Naive thymus-derived CD4-positive, alpha-beta T cell (primary cell): ENCODE measurements at regions of chr19 and their contacts with region 1.

Region 1: DNA sequence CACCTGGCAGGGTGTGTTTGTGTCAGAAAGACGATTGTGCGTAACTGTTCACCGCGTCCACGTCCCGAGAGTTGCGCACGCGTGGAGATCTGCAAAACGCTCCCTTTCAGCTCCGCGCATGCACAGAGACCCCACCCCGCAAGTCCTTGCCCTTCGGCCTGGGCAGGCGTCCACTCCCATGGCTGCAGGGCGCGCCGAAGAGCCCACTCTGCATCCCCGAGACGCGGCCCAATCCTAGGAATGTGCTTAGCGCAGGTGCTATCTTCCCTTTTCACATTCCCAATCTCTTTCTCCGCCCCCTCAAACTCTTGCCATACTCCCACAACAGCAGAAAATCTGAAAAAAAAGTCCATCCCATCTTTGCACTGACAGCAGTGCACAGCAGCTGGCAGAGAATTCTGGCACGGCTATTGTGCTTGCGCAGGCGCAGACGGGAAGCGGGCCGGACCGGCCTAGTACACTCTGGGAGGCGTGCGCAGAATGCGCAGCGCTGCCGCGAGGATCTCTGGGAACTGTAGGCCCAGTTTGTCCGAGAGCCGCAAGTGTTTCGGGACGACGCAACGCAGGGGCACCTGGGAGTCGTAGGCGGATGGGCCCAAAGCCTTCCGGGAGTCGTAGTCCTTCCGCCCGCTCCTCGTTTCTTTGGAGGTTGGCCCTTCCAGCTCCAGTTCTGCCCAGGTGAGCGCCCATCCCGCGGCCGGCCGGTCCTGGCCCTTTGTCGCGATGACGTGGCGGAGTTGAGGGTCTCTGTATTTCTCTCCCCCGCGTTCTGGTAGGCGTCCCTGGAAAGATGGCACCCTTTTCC is 23.1 kb downstream of the ZNF175 start:
- DNase-seq: peak; percentile 87 to 95 (median 91)
- ATAC-seq: peak; percentile 100
- H3K4me3 ChIP-seq: peak overlapping the region; percentile 88
- H3K4me3 Mint-ChIP-seq: peak overlapping the region; percentile 88 to 99 (median 96)
- H3K27ac ChIP-seq: peak overlapping the region; percentile 66
- H3K27ac Mint-ChIP-seq: peak overlapping the region; percentile 29 to 97 (median 78)
- H3K4me1 ChIP-seq: peaks cover 6 to 17% of the 10 kb centered on the region in 2 donors
- H3K4me1 Mint-ChIP-seq: peaks cover 19 to 37% (median 24%) of the 10 kb centered on the region in 7 donors
- H3K27me3 ChIP-seq: no peaks in the 10 kb centered on the region
- H3K27me3 Mint-ChIP-seq: peaks cover 0 to 23% (median 15%) of the 10 kb centered on the region in 5 donors

Region 2: GRCh38 chr19:50511068-50511822 is 1082.9 kb before region 1 on chr19 and contains the start of gene JOSD2:
- CTCF ChIA-PET with region 1: no interaction called
- POLR2A ChIA-PET with region 1: no interaction called
- intact Hi-C with region 1: loop called in 1 of 2 experiments (anchors 2 kb)
- DNase-seq: peak; percentile 89 to 99 (median 96)
- ATAC-seq: peak; percentile 94
- H3K4me3 ChIP-seq: peak within 1 kb of the TSS; percentile 75
- H3K4me3 Mint-ChIP-seq: peak within 1 kb of the TSS; percentile 75 to 97 (median 88)
- H3K27ac ChIP-seq: peak within 1 kb of the TSS; percentile 86
- H3K27ac Mint-ChIP-seq: peak within 1 kb of the TSS; percentile 87 to 99 (median 97)
- H3K4me1 ChIP-seq: peaks cover 7 to 16% of the 10 kb centered on the region in 2 donors
- H3K4me1 Mint-ChIP-seq: peaks cover 0 to 27% (median 19%) of the 10 kb centered on the region in 7 donors
- H3K27me3 ChIP-seq: no peaks in the 10 kb centered on the region
- H3K27me3 Mint-ChIP-seq: peaks cover 0 to 16% (median 6%) of the 10 kb centered on the region in 5 donors
- total RNA-seq, gene JOSD2: 13.0 to 45.9 (median 22.7) TPM

Region 3: DNA sequence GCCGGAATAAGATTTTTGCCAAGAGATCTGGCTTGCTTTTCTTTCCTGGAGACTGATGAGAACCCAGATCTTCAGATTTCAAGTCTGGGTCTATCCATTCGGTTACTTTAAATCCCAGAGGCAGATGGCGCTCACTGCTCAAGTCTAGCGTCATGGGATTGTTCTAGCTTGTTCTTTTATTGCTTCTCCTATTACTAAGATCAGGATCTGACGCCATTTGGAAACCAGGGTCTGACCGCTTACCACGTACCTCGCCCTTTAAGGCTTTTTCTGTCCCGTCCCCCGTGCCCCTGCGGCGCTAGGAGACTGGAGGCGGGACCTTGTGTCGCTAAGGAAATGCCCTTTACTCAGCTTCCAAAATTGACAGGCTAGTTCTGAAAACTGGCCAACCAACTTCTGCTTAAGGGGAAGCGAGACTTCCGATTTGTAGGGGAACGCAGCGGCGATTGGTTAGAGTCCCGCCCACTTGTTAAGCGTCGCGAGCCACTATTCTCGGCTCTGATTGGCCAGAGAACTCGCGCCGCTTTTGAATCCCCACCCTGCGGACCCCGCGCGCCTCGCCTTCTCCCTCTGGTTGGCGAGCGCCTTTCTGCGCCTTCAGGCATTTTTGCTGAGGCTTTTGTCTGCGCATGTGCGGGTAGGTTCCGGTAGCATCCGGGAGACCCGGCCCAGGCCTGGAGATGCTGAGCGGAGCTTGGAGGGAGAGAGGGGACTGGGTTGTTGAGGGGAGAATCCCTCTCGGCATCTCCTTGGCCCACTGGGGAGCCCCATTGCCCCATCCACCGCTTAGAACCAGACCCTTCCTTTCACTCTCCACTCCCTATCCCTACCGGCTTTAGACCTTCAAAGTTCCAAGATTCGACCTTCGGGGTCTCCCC is 200.0 kb before region 1 on chr19:
- CTCF ChIA-PET with region 1: no interaction called
- POLR2A ChIA-PET with region 1: no interaction called
- intact Hi-C with region 1: loop called in 1 of 2 experiments (anchors 1 kb)
- DNase-seq: peak; percentile 64 to 91 (median 86)
- ATAC-seq: peak; percentile 95
- H3K4me3 ChIP-seq: peak overlapping the region; percentile 46
- H3K4me3 Mint-ChIP-seq: peak overlapping the region; percentile 79 to 91 (median 86)
- H3K27ac ChIP-seq: peak overlapping the region; percentile 50
- H3K27ac Mint-ChIP-seq: peak overlapping the region; percentile 32 to 97 (median 73)
- H3K4me1 ChIP-seq: peaks cover 0 to 14% of the 10 kb centered on the region in 2 donors
- H3K4me1 Mint-ChIP-seq: peaks cover 6 to 60% (median 16%) of the 10 kb centered on the region in 7 donors
- H3K27me3 ChIP-seq: no peaks in the 10 kb centered on the region
- H3K27me3 Mint-ChIP-seq: peaks cover 0 to 4% (median 0%) of the 10 kb centered on the region in 5 donors

Region 4: GRCh38 chr19:51570962-51571575 is 23.1 kb before region 1 on chr19 and contains the start of gene ZNF175:
- CTCF ChIA-PET with region 1: no interaction called
- POLR2A ChIA-PET with region 1: interaction called, 3 read pairs
- intact Hi-C with region 1: loop called (anchors 1 kb)
- DNase-seq: peak; percentile 41 to 79 (median 71)
- ATAC-seq: peak; percentile 96
- H3K4me3 ChIP-seq: peak within 1 kb of the TSS; percentile 84
- H3K4me3 Mint-ChIP-seq: peak within 1 kb of the TSS; percentile 82 to 99 (median 96)
- H3K27ac ChIP-seq: peak within 1 kb of the TSS; percentile 30
- H3K27ac Mint-ChIP-seq: peak within 1 kb of the TSS; percentile 36 to 90 (median 80)
- H3K4me1 ChIP-seq: peaks cover 10 to 11% of the 10 kb centered on the region in 2 donors
- H3K4me1 Mint-ChIP-seq: peaks cover 21 to 45% (median 34%) of the 10 kb centered on the region in 7 donors
- H3K27me3 ChIP-seq: no peaks in the 10 kb centered on the region
- H3K27me3 Mint-ChIP-seq: peaks cover 4 to 18% (median 7%) of the 10 kb centered on the region in 5 donors
- total RNA-seq, gene ZNF175: 6.8 to 19.1 (median 10.2) TPM

Region 5: DNA sequence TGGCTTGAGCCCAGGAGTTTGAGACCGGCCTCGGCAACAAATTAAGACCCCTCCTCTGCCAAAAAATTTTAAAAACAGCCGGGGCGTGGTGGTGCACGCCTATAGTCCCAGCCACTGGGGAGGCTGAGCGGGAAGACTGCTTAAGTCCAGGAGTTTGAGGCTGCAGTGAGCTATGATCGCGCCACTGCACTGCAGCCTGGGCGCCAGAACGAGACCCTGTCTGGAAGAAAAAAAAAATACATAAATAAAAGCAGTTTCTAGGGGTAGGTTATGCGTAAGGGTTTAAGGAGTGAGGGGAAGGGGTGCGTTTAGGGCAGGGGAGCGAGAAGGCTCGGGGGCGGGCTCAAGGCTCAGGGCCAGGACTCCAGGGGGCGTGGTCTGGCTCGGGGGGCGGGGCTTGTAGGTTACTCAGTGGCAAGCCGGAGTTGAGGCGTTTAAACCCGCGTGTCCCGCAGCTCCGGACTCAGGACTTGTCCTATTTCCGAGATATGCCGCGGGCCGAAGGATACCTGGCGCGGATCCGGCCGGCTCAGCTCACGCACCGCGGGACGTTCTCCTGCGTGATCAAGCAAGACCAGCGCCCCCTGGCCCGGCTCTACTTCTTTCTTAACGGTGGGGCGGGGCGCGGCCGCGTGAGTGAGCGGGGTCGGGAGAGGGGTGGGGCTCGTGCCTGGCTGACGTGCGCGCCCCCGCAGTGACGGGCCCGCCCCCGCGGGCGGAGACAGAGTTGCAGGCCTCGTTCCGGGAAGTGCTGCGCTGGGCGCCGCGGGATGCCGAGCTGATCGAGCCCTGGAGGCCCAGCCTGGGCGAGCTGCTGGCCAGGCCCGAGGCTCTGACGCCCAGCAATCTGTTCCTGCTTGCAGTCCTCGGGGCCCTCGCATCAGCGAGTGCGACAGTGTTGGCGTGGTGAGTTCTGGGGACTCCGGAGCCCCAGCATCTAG is 109.7 kb after region 1 on chr19:
- CTCF ChIA-PET with region 1: no interaction called
- POLR2A ChIA-PET with region 1: interaction called, 5 read pairs
- intact Hi-C with region 1: loop called (anchors 1 to 5 kb)
- DNase-seq: peak; percentile 95 to 98 (median 97)
- ATAC-seq: peak; percentile 98
- H3K4me3 ChIP-seq: peak overlapping the region; percentile 98
- H3K4me3 Mint-ChIP-seq: peak overlapping the region; percentile 82 to 92 (median 90)
- H3K27ac ChIP-seq: peak overlapping the region; percentile 99
- H3K27ac Mint-ChIP-seq: peak overlapping the region; percentile 87 to 95 (median 91)
- H3K4me1 ChIP-seq: peaks cover 3 to 9% of the 10 kb centered on the region in 2 donors
- H3K4me1 Mint-ChIP-seq: peaks cover 29 to 50% (median 43%) of the 10 kb centered on the region in 7 donors
- H3K27me3 ChIP-seq: no peaks in the 10 kb centered on the region
- H3K27me3 Mint-ChIP-seq: peaks cover 0 to 7% (median 0%) of the 10 kb centered on the region in 5 donors

Region 6: GRCh38 chr19:51948975-51949374 is 354.8 kb after region 1 on chr19:
- CTCF ChIA-PET with region 1: no interaction called
- POLR2A ChIA-PET with region 1: no interaction called
- intact Hi-C with region 1: no loop called
- DNase-seq: no peak
- ATAC-seq: no peak
- H3K4me3 ChIP-seq: no peak overlapping the region
- H3K4me3 Mint-ChIP-seq: no peak overlapping the region
- H3K27ac ChIP-seq: no peak overlapping the region
- H3K27ac Mint-ChIP-seq: no peak overlapping the region
- H3K4me1 ChIP-seq: no peaks in the 10 kb centered on the region
- H3K4me1 Mint-ChIP-seq: no peaks in the 10 kb centered on the region
- H3K27me3 ChIP-seq: no peaks in the 10 kb centered on the region
- H3K27me3 Mint-ChIP-seq: no peaks in the 10 kb centered on the region